PC-9 (cell line): ENCODE measurements at regions of chr10 and their contacts with region 1.

Region 1: GRCh38 chr10:32279795-32280194 is 67.2 kb downstream of the EPC1 start:
- DNase-seq: no peak
- H3K4me3 ChIP-seq: no peak overlapping the region
- H3K27ac ChIP-seq: no peak overlapping the region
- H3K4me1 ChIP-seq: no peaks in the 10 kb centered on the region
- H3K27me3 ChIP-seq: no peaks in the 10 kb centered on the region
- CTCF ChIP-seq: no peak

Region 2: GRCh38 chr10:31242902-31243301 is 1036.9 kb before region 1 on chr10:
- CTCF ChIA-PET with region 1: no interaction called
- POLR2A ChIA-PET with region 1: no interaction called
- intact Hi-C with region 1: no loop called
- DNase-seq: peak; percentile 51 to 67
- H3K4me3 ChIP-seq: no peak overlapping the region
- H3K27ac ChIP-seq: no peak overlapping the region; the same call in 1 of the 2 replicates
- H3K4me1 ChIP-seq: 0 out of 2 replicates have a peak, but pooled peaks cover 9% of the 10 kb centered on the region
- H3K27me3 ChIP-seq: no peaks in the 10 kb centered on the region
- CTCF ChIP-seq: no peak

Region 3: GRCh38 chr10:32298054-32298812 is 18.4 kb after region 1 on chr10:
- CTCF ChIA-PET with region 1: no interaction called
- POLR2A ChIA-PET with region 1: interaction called, 13 read pairs
- intact Hi-C with region 1: no loop called
- DNase-seq: peak in 1 of 2 experiments; percentile 89
- H3K4me3 ChIP-seq: peak overlapping the region; percentile 24; the same call in 1 of the 2 replicates
- H3K27ac ChIP-seq: peak overlapping the region; percentile 82
- H3K4me1 ChIP-seq: peaks cover 11% of the 10 kb centered on the region
- H3K27me3 ChIP-seq: no peaks in the 10 kb centered on the region
- CTCF ChIP-seq: no peak

Region 4: DNA sequence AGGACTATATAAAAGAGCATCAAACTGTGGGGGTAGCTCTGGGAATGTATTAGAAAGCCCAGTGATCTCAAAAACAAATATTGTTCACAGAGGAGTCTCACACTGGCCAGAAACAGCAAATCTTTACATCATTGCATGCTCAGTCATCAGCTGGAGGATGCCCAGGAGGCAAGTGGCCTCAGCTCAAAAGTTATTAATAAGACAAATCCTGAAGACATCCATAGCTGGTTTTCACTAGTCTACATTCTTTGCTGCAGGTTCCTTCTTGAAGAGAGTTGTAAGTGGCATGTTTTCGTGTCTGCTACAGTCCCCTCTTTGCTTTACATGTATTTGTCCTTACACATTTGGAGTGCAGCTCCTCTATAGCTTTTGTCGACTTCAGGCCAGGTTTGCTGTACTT is 157.5 kb after region 1 on chr10:
- CTCF ChIA-PET with region 1: no interaction called
- POLR2A ChIA-PET with region 1: no interaction called
- intact Hi-C with region 1: no loop called
- DNase-seq: no peak
- H3K4me3 ChIP-seq: no peak overlapping the region
- H3K27ac ChIP-seq: no peak overlapping the region
- H3K4me1 ChIP-seq: no peaks in the 10 kb centered on the region
- H3K27me3 ChIP-seq: no peaks in the 10 kb centered on the region
- CTCF ChIP-seq: no peak